Prostate gland (tissue), 2 donors: ENCODE measurements at regions of chr5 and their contacts with region 1.

Region 1: GRCh38 chr5:154214371-154215106 is 24.0 kb downstream of the GALNT10 start:
- DNase-seq: no peak
- H3K4me3 ChIP-seq: no peak overlapping the region
- H3K27ac ChIP-seq: no peak overlapping the region
- H3K4me1 ChIP-seq: no peaks in the 10 kb centered on the region
- H3K27me3 ChIP-seq: no peaks in the 10 kb centered on the region
- CTCF ChIP-seq: no peak
- POLR2A ChIP-seq: no peak

Region 2: GRCh38 chr5:154260224-154260927 is 45.8 kb after region 1 on chr5:
- intact Hi-C with region 1: loop called (anchors 10 kb)
- DNase-seq: no peak
- H3K4me3 ChIP-seq: no peak overlapping the region
- H3K27ac ChIP-seq: no peak overlapping the region
- H3K4me1 ChIP-seq: no peaks in the 10 kb centered on the region
- H3K27me3 ChIP-seq: no peaks in the 10 kb centered on the region
- CTCF ChIP-seq: no peak
- POLR2A ChIP-seq: no peak

Region 3: GRCh38 chr5:154373729-154374179 is 159.2 kb after region 1 on chr5:
- intact Hi-C with region 1: no loop called
- DNase-seq: no peak
- H3K4me3 ChIP-seq: no peak overlapping the region
- H3K27ac ChIP-seq: no peak overlapping the region
- H3K4me1 ChIP-seq: no peaks in the 10 kb centered on the region
- H3K27me3 ChIP-seq: no peaks in the 10 kb centered on the region
- CTCF ChIP-seq: no peak
- POLR2A ChIP-seq: no peak